ENCODE measurements at regions of chr10 and their contacts with region 1.

Region 1: DNA sequence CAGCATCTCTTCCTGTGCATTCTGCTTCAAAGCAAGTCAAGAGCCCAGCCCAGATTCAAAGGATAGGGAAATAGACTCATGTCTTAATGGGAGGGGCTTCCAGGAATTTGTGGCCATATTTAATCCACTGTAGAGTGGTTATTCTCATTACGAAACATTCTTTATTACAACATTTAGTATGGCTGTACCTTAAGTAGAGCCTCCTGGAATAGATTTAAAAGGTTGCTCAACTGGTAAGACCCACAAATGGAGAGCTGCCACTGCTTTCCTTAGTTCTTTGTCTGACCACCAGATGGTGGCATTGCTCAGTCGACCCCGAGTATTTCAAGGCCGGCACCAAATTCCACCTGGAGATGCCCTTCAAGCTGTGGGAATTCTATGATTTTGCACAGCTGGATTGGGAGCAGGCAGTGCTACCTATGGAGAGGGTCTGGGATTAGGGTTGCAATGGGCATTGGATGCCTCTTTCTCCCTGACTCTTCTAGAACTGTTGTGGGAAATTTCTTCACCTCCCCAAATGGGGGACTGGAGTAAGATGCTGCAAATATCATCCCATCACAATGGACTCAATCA is 102.2 kb downstream of the RBM20 start:
- DNase-seq: peak; percentile 87
- H3K4me3 Mint-ChIP-seq: no peak overlapping the region
- H3K27ac Mint-ChIP-seq: peak overlapping the region; percentile 51
- H3K4me1 Mint-ChIP-seq: peaks cover 14% of the 10 kb centered on the region
- H3K27me3 Mint-ChIP-seq: no peaks in the 10 kb centered on the region
- CTCF ChIP-seq: peak; percentile 86

Region 2: DNA sequence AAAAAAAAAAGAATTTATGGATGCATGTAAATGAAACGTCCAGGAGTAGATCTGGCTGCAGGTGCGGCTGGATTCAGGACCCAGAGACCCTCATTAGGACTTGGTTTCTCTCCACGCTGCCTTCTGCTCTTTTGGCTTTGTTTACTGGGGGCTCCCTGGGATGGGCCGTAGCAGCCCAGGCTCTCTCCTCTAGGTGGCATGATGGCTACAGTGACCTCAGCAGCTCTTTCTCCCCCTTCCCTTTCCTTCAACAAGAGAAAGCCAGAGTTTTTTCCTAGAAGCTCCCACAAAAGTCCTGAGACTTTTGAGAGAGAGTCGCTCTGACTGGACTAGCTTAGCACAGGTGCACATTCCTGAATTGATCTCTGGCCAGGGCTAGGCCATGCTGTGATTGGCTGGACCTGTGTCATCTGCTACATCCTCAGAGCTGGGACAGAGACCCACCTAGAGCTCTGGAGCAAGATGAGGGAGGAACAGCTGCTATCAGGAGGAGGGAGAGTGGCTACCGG is 57.5 kb after region 1 on chr10:
- CTCF ChIA-PET with region 1: interaction called, 13 read pairs
- POLR2A ChIA-PET with region 1: interaction called, 10 read pairs
- intact Hi-C with region 1: loop called (anchors 2 kb)
- DNase-seq: peak; percentile 61
- H3K4me3 Mint-ChIP-seq: no peak overlapping the region
- H3K27ac Mint-ChIP-seq: no peak overlapping the region
- H3K4me1 Mint-ChIP-seq: peaks cover 32% of the 10 kb centered on the region
- H3K27me3 Mint-ChIP-seq: no peaks in the 10 kb centered on the region
- CTCF ChIP-seq: peak; percentile 49

Region 3: DNA sequence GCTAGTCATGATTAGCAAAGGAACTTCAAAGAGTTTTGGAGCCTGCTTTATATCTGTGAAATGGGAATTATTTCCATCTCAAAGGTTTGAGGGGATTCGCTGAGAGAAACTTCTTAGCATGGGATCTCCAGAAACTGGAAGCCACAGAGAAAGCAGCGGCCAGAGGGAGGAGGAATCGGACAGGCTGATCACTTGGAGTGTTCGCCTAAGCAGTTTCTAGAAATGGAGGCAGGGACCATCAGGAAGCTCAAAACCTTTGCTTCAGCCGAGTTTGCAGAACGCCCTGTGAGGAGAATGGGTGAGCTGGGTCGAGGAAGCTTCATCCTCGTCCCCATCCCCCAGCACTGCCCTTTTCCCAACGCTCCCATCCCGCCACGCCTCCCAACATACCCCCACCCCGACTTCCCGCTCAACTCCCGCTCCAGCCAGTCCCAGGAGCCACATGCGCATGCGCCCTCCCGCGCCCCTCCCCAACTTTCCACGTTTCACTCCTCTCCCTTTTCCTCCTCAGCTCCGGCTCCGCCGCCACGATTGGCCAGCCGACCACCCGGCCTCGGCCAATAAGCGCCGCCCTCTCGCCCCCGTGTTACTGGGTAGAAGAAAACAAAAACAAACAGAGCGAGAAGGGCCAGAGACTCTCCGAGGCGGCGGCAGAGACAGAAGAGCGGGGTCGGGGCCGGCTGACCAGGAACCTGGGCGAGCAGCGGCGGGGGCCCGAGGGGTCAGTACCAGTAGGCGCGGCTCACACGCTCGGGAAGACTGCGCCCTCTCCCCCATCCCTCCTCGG is 125.2 kb after region 1 on chr10 and contains the start of gene PDCD4:
- CTCF ChIA-PET with region 1: interaction called, 5 read pairs
- POLR2A ChIA-PET with region 1: interaction called, 11 read pairs
- intact Hi-C with region 1: loop called (anchors 1 kb)
- DNase-seq: peak; percentile 98
- H3K4me3 Mint-ChIP-seq: peak within 1 kb of the TSS; percentile 78
- H3K27ac Mint-ChIP-seq: peak within 1 kb of the TSS; percentile 91
- H3K4me1 Mint-ChIP-seq: peaks cover 30% of the 10 kb centered on the region
- H3K27me3 Mint-ChIP-seq: no peaks in the 10 kb centered on the region
- CTCF ChIP-seq: no peak
- total RNA-seq, gene PDCD4: 80.7 and 133 TPM in 2 replicates

Region 4: GRCh38 chr10:110918643-110919363 is 172.5 kb after region 1 on chr10 and contains the start of gene BBIP1:
- CTCF ChIA-PET with region 1: no interaction called
- POLR2A ChIA-PET with region 1: interaction called, 8 read pairs
- intact Hi-C with region 1: loop called (anchors 1 kb)
- DNase-seq: peak; percentile 100
- H3K4me3 Mint-ChIP-seq: peak within 1 kb of the TSS; percentile 89
- H3K27ac Mint-ChIP-seq: peak within 1 kb of the TSS; percentile 100
- H3K4me1 Mint-ChIP-seq: peaks cover 22% of the 10 kb centered on the region
- H3K27me3 Mint-ChIP-seq: no peaks in the 10 kb centered on the region
- CTCF ChIP-seq: no peak
- total RNA-seq, gene BBIP1: 46.9 and 68.7 TPM in 2 replicates

Region 5: GRCh38 chr10:111360260-111360925 is 614.1 kb after region 1 on chr10:
- CTCF ChIA-PET with region 1: no interaction called
- POLR2A ChIA-PET with region 1: no interaction called
- intact Hi-C with region 1: loop called (anchors 1 kb)
- DNase-seq: peak; percentile 63
- H3K4me3 Mint-ChIP-seq: no peak overlapping the region
- H3K27ac Mint-ChIP-seq: no peak overlapping the region
- H3K4me1 Mint-ChIP-seq: no peaks in the 10 kb centered on the region
- H3K27me3 Mint-ChIP-seq: peaks cover 61% of the 10 kb centered on the region
- CTCF ChIP-seq: peak; percentile 66